B cell (primary cell): ENCODE measurements at regions of chr16 and their contacts with region 1.

Region 1: DNA sequence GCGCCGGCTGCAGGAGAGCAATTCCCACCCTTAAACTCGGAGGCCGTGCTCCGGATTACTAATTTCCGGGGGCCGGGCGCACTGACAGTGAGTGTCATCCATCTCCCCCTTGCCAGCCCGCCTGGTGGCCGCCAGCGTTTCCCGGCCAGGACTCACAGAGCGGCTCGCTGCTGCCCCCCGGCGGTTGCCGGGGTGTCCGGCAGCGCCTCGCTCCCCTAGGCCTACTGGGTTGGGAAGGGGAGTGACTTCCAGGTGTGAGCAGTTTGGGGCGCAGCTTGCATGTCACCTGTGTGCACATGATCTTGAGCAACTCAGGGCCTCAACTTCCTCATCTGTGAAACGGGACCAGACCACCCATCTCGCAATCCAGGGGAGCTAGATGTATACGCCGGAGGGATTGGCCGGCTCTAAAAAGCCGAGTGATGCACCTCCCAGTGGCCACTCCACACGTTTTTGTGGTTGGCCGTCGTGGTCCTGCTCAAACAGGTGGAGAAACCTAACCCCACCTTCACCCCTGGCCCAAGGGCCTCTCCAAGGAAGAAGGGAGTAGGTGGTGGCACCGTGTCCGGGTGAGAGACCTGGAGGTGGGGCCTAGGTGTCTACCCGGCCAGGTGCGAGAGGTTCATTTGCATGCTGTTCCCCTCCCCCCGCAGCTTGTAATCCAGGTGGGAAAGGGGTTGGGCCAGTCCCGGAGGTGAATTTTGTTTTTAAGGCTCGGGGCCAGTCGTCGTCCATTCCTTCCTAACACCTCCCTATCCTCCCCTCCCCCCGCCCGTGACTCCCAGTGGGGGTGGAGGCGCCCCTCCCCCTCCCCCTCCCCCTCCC is 2.4 kb upstream of the GSE1 start:
- DNase-seq: peak; percentile 88
- ATAC-seq: peak; percentile 53
- H3K4me3 ChIP-seq: peak overlapping the region in 4 of 5 experiments; percentile 22 to 71 (median 64)
- H3K4me3 Mint-ChIP-seq: peak overlapping the region; percentile 90
- H3K27ac ChIP-seq: no peak overlapping the region
- H3K27ac Mint-ChIP-seq: peak overlapping the region; percentile 87
- H3K4me1 ChIP-seq: peaks cover 55 to 63% of the 10 kb centered on the region in 2 donors
- H3K4me1 Mint-ChIP-seq: peaks cover 59% of the 10 kb centered on the region
- H3K27me3 ChIP-seq: no peaks in the 10 kb centered on the region
- H3K27me3 Mint-ChIP-seq: no peaks in the 10 kb centered on the region
- CTCF ChIP-seq: peak; percentile 96

Region 2: GRCh38 chr16:85420501-85421337 is 190.0 kb before region 1 on chr16:
- CTCF ChIA-PET with region 1: interaction called, 55 read pairs
- POLR2A ChIA-PET with region 1: interaction called, 3 read pairs
- intact Hi-C with region 1: loop called (anchors 1 kb)
- DNase-seq: peak; percentile 80
- ATAC-seq: peak; percentile 81
- H3K4me3 ChIP-seq: no peak overlapping the region
- H3K4me3 Mint-ChIP-seq: no peak overlapping the region
- H3K27ac ChIP-seq: no peak overlapping the region
- H3K27ac Mint-ChIP-seq: no peak overlapping the region
- H3K4me1 ChIP-seq: peaks cover 0 to 5% of the 10 kb centered on the region in 2 donors
- H3K4me1 Mint-ChIP-seq: no peaks in the 10 kb centered on the region
- H3K27me3 ChIP-seq: peaks cover 0 to 3% (median 0%) of the 10 kb centered on the region in 4 experiments
- H3K27me3 Mint-ChIP-seq: peaks cover 22% of the 10 kb centered on the region
- CTCF ChIP-seq: peak; percentile 100

Region 3: DNA sequence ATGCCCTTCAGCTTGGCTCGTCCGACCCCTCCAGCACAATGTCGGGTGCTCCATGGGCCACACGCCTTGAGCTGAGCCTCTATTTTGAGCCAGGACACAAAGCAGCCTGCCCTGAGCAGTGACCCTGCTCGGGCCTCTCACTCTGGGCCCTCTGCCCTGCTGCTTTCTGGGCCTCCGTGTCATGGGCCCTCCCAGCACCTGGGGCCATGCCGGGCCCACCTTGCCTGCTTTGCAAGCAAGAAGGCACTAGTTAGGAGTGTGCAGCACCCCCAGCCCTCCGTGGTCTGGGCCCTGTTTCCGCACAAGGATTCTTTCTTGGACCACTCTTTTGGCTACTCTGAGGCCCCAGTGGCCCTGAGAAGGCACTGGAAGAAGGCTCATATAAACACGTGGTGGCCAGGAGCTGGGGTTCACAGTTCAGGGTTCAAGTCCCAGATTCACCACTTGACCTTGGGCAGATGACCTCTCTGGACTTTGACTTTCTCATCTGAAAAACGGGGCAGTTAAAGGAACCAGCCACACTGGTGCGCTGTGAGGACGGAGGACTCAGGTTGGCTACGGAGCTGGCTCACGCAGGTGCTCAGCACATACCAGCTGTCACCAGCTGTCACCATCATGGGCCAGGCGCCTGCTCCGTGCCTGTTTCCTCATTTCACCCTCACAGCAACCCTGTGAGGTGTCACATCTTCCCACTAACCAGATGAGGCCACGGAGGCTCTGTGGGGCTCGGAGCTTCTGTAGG is 163.6 kb before region 1 on chr16:
- CTCF ChIA-PET with region 1: interaction called, 12 read pairs
- POLR2A ChIA-PET with region 1: interaction called, 6 read pairs
- intact Hi-C with region 1: loop called (anchors 1 kb)
- DNase-seq: peak; percentile 77
- ATAC-seq: peak; percentile 86
- H3K4me3 ChIP-seq: no peak overlapping the region
- H3K4me3 Mint-ChIP-seq: peak overlapping the region; percentile 23
- H3K27ac ChIP-seq: no peak overlapping the region
- H3K27ac Mint-ChIP-seq: peak overlapping the region; percentile 56
- H3K4me1 ChIP-seq: peaks cover 24 to 31% of the 10 kb centered on the region in 2 donors
- H3K4me1 Mint-ChIP-seq: peaks cover 24% of the 10 kb centered on the region
- H3K27me3 ChIP-seq: peaks cover 0 to 15% (median 3%) of the 10 kb centered on the region in 4 experiments
- H3K27me3 Mint-ChIP-seq: peaks cover 11% of the 10 kb centered on the region
- CTCF ChIP-seq: no peak

Region 4: DNA sequence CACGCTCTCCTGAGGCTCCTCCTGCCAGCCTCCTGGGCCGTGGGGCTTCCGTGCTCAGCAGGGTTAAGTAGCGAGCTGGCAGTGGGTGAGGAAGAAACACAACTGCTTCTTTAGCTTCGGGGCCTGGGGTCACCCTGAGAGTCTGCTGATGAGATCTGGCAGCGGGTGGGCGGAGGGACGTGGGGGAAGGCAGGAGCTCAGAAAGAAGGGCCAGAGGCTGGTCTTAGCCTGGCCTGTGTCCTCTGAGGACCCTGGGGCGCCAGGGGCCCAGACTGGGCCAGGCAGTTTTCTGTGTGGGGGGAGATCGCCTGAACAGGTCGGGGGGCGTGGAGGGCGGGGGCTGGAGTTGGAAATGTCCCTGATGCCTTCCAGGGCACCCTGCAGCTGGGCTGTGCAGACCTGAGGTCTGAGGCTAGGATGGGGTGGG is 95.4 kb before region 1 on chr16:
- CTCF ChIA-PET with region 1: no interaction called
- POLR2A ChIA-PET with region 1: no interaction called
- intact Hi-C with region 1: no loop called
- DNase-seq: no peak
- ATAC-seq: no peak
- H3K4me3 ChIP-seq: no peak overlapping the region
- H3K4me3 Mint-ChIP-seq: no peak overlapping the region
- H3K27ac ChIP-seq: no peak overlapping the region
- H3K27ac Mint-ChIP-seq: no peak overlapping the region
- H3K4me1 ChIP-seq: no peaks in the 10 kb centered on the region
- H3K4me1 Mint-ChIP-seq: no peaks in the 10 kb centered on the region
- H3K27me3 ChIP-seq: no peaks in the 10 kb centered on the region
- H3K27me3 Mint-ChIP-seq: peaks cover 4% of the 10 kb centered on the region
- CTCF ChIP-seq: no peak

Region 5: DNA sequence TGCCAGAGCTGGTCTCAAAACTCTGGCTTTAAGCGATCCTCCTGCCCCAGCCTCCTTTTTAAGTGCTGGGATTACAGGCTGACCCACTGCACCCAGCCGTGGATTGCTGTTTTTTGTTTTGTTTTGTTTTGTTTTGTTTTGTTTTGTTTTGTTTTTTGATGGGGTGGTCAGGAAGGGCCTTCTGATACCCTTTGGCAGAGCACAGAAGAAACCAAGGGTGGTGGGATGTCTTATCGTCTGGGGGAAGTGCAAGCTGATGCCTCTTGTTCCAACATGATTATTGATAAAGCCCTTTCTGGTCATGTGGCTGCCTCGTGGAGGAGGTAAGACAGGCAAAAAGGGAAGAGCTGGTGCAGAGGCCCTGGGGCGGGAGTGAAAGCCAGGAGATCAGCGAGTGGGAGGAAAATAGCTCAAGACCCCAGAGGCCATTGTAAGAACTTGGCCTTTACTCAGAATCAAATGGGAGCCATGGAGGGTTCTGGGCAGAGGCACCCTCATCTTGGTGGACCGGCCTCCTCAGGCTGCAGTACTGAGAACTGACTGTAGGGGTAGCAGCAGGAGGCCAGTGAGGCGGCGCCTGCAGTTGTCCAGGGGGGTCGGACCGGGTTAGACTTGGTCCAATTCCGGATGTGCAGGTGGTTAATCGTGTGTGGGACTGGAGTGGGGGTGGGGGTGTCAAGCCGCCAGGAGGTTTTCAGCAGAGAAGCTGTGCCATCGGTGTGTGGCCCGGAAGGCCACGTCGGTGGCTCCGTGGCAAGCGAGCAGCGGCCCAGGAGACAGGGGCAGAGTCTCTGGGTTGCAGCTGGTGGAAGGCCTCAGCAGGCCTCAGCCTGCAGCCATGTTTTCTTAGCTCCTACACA is 82.0 kb before region 1 on chr16:
- CTCF ChIA-PET with region 1: interaction called, 23 read pairs
- POLR2A ChIA-PET with region 1: no interaction called
- intact Hi-C with region 1: no loop called
- DNase-seq: peak; percentile 50
- ATAC-seq: peak; percentile 33
- H3K4me3 ChIP-seq: no peak overlapping the region
- H3K4me3 Mint-ChIP-seq: no peak overlapping the region
- H3K27ac ChIP-seq: no peak overlapping the region
- H3K27ac Mint-ChIP-seq: peak overlapping the region; percentile 53
- H3K4me1 ChIP-seq: peaks cover 0 to 5% of the 10 kb centered on the region in 2 donors
- H3K4me1 Mint-ChIP-seq: no peaks in the 10 kb centered on the region
- H3K27me3 ChIP-seq: peaks cover 0 to 23% (median 6%) of the 10 kb centered on the region in 4 experiments
- H3K27me3 Mint-ChIP-seq: peaks cover 12% of the 10 kb centered on the region
- CTCF ChIP-seq: peak; percentile 68

Region 6: DNA sequence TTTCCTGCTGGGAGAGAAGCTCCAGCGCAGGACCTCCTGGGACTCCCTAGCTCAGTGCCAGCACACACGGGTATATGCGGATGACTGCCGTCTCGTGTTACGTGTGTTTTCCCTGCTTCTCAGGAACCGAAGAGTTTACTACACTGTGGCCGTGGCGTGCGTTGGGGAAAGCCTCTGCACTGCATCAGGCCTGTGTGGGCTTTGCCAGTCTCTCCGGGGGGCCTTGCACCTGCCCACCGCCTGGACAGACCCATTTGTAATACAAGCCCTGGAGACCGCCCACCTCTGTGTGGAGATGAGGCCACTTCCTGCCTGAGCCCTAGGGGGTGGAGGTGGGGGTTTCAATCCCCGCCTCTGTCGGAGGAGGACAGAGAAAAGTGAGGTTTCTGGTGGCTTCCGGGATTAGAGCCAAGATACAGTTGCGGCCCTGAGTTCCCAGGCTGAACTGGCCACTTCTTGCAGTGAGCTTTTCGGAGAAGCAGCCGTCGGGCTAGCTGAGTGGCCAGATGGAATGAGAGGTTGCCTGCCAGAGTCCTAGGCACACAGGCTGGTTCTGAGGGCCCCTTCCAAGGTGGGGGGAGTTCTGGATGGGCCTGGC is 41.0 kb before region 1 on chr16:
- CTCF ChIA-PET with region 1: interaction called, 10 read pairs
- POLR2A ChIA-PET with region 1: no interaction called
- intact Hi-C with region 1: loop called (anchors 1 kb)
- DNase-seq: peak; percentile 46
- ATAC-seq: peak; percentile 37
- H3K4me3 ChIP-seq: peak overlapping the region in 4 of 5 experiments; percentile 0 to 43 (median 12)
- H3K4me3 Mint-ChIP-seq: peak overlapping the region; percentile 68
- H3K27ac ChIP-seq: peak overlapping the region; percentile 39 to 70
- H3K27ac Mint-ChIP-seq: peak overlapping the region; percentile 84
- H3K4me1 ChIP-seq: peaks cover 38 to 44% of the 10 kb centered on the region in 2 donors
- H3K4me1 Mint-ChIP-seq: peaks cover 66% of the 10 kb centered on the region
- H3K27me3 ChIP-seq: no peaks in the 10 kb centered on the region
- H3K27me3 Mint-ChIP-seq: no peaks in the 10 kb centered on the region
- CTCF ChIP-seq: no peak

Region 7: GRCh38 chr16:85667841-85668413 is 57.2 kb after region 1 on chr16:
- CTCF ChIA-PET with region 1: no interaction called
- POLR2A ChIA-PET with region 1: no interaction called
- intact Hi-C with region 1: no loop called
- DNase-seq: no peak
- ATAC-seq: no peak
- H3K4me3 ChIP-seq: no peak overlapping the region
- H3K4me3 Mint-ChIP-seq: no peak overlapping the region
- H3K27ac ChIP-seq: no peak overlapping the region
- H3K27ac Mint-ChIP-seq: no peak overlapping the region
- H3K4me1 ChIP-seq: no peaks in the 10 kb centered on the region
- H3K4me1 Mint-ChIP-seq: no peaks in the 10 kb centered on the region
- H3K27me3 ChIP-seq: no peaks in the 10 kb centered on the region
- H3K27me3 Mint-ChIP-seq: no peaks in the 10 kb centered on the region
- CTCF ChIP-seq: no peak